Thyroid gland (tissue), 4 donors: ENCODE measurements at regions of chr9 and their contacts with region 1.

Region 1: DNA sequence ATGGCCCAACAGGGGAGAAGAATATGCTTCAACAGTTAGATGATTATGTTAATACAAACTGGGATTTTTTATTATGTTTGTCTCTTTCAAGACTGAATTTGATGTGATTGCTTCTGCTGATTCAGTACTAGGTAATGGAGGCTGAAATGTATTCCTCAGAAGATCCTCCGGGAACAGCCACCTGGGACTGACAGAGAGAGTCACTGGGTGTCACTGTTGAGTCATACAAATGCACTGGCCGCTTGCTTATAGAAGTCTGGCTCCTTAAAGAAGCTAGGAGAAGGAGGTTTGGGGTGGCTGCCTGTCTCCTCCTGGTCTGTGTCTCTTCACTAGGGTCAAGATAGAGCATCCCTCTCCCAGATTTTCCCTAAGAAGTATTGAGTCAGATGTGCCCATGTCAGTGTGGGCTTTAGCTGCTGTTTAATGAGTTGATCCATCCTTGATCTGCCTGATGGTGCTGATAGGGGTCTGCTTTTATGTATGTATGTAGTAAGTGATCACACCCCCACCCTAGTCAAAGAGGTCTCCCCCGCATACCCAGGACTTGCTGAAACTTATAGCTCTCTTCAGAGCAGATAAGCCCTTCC is 773.4 kb downstream of the BRINP1 start:
- DNase-seq: peak; percentile 52 to 72
- H3K4me3 ChIP-seq: no peak overlapping the region
- H3K27ac ChIP-seq: peak overlapping the region; percentile 24 to 80 (median 61)
- H3K4me1 ChIP-seq: peaks cover 10 to 19% of the 10 kb centered on the region in 2 donors
- H3K27me3 ChIP-seq: no peaks in the 10 kb centered on the region
- CTCF ChIP-seq: peak; percentile 15 to 84 (median 66)
- POLR2A ChIP-seq: no peak

Region 2: GRCh38 chr9:118640836-118641557 is 45.2 kb after region 1 on chr9:
- intact Hi-C with region 1: no loop called
- DNase-seq: peak in 1 of 2 donors; percentile 26
- H3K4me3 ChIP-seq: no peak overlapping the region
- H3K27ac ChIP-seq: peak overlapping the region; percentile 1 to 96 (median 86)
- H3K4me1 ChIP-seq: peaks cover 16 to 32% of the 10 kb centered on the region in 2 donors
- H3K27me3 ChIP-seq: no peaks in the 10 kb centered on the region
- CTCF ChIP-seq: no peak
- POLR2A ChIP-seq: no peak

Region 3: DNA sequence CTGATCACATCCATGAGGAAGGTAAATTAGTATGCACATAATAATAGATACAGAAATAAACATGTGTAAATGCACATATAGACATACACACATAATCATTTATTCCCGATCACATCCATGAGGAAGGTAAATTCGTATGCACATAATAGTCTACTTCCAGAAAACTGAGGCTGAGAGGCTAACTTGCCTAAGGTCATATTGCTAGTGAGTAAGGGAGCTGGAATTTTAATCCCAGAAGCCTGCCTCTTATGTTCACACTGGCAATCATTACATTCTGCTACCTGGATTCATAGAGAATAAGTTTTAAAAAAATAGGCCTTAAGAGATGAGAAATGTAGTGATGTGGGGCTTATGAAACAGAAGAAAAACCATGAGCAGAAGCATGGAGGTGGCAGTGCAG is 57.1 kb after region 1 on chr9:
- intact Hi-C with region 1: loop called (anchors 10 kb)
- DNase-seq: no peak
- H3K4me3 ChIP-seq: no peak overlapping the region
- H3K27ac ChIP-seq: no peak overlapping the region
- H3K4me1 ChIP-seq: no peaks in the 10 kb centered on the region
- H3K27me3 ChIP-seq: no peaks in the 10 kb centered on the region
- CTCF ChIP-seq: no peak
- POLR2A ChIP-seq: no peak

Region 4: GRCh38 chr9:119289740-119290433 is 694.1 kb after region 1 on chr9:
- intact Hi-C with region 1: loop called (anchors 5 kb)
- DNase-seq: peak; percentile 68 to 74
- H3K4me3 ChIP-seq: no peak overlapping the region
- H3K27ac ChIP-seq: no peak overlapping the region
- H3K4me1 ChIP-seq: no peaks in the 10 kb centered on the region
- H3K27me3 ChIP-seq: no peaks in the 10 kb centered on the region
- CTCF ChIP-seq: peak; percentile 71 to 96 (median 86)
- POLR2A ChIP-seq: no peak